MCF 10A (cell line): ENCODE measurements at regions of chr18 and their contacts with region 1.

Region 1: GRCh38 chr18:54983041-54983686 is 23.9 kb upstream of the CCDC68 start:
- DNase-seq: peak; percentile 73
- H3K4me3 Mint-ChIP-seq: no peak overlapping the region
- H3K27ac Mint-ChIP-seq: no peak overlapping the region
- H3K4me1 Mint-ChIP-seq: no peaks in the 10 kb centered on the region
- H3K27me3 Mint-ChIP-seq: no peaks in the 10 kb centered on the region
- CTCF ChIP-seq: peak; percentile 74

Region 2: DNA sequence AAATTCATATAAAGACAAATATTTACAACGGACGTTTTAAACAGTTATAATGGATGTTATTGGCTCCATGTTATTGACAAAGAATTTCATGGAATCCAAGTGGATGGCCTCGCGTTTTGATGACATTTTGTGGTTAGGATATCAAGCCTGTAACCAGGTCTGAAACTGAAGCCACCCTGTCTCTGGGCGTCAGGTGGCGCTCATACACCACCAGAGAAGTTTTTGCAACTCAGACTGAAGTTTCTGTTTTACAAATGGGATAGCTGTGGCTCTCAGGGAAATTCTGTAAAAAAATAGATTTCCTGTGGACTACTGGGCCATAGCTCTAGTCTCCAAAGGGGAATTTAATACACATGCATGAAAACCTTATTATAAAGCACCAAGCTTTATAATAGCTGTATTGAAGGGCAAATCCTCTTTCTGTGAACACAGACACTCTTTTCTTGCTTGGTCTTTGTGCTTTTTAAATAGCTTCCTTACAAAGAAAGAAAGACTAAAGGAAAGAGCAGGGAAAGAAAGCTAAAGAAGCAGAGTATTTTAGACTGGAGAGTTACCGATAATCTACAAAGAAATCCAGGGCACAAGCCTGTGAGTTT is 538.7 kb before region 1 on chr18:
- CTCF ChIA-PET with region 1: interaction called, 5 read pairs
- POLR2A ChIA-PET with region 1: no interaction called
- intact Hi-C with region 1: loop called (anchors 1 kb)
- DNase-seq: peak; percentile 71
- H3K4me3 Mint-ChIP-seq: no peak overlapping the region
- H3K27ac Mint-ChIP-seq: no peak overlapping the region
- H3K4me1 Mint-ChIP-seq: peaks cover 5% of the 10 kb centered on the region
- H3K27me3 Mint-ChIP-seq: no peaks in the 10 kb centered on the region
- CTCF ChIP-seq: peak; percentile 93

Region 3: GRCh38 chr18:54671291-54671881 is 311.8 kb before region 1 on chr18:
- CTCF ChIA-PET with region 1: interaction called, 25 read pairs
- POLR2A ChIA-PET with region 1: no interaction called
- intact Hi-C with region 1: no loop called
- DNase-seq: peak; percentile 59
- H3K4me3 Mint-ChIP-seq: no peak overlapping the region
- H3K27ac Mint-ChIP-seq: no peak overlapping the region
- H3K4me1 Mint-ChIP-seq: no peaks in the 10 kb centered on the region
- H3K27me3 Mint-ChIP-seq: no peaks in the 10 kb centered on the region
- CTCF ChIP-seq: peak; percentile 49

Region 4: DNA sequence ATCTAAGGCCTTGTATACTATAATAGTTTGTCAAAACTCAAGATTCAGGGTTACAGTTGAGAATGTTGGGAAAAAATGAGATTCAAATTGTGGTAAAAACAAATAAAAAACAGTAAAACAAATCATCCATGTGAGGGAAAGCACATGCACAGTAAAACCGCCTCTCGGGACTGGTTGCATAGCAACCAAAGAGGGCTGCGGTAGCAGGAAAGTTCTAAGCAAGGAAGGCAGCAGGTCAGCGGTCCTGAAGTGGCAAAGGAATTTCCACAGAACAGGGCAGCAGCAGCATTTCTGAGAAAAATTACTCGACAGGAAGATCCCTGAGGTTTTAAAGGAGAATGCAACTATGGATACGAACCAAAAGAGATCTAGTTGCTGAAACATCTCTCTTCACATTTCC is 298.4 kb before region 1 on chr18:
- CTCF ChIA-PET with region 1: interaction called, 54 read pairs
- POLR2A ChIA-PET with region 1: interaction called, 5 read pairs
- intact Hi-C with region 1: loop called (anchors 1 kb)
- DNase-seq: no peak
- H3K4me3 Mint-ChIP-seq: no peak overlapping the region
- H3K27ac Mint-ChIP-seq: no peak overlapping the region
- H3K4me1 Mint-ChIP-seq: peaks cover 1% of the 10 kb centered on the region
- H3K27me3 Mint-ChIP-seq: no peaks in the 10 kb centered on the region
- CTCF ChIP-seq: no peak

Region 5: GRCh38 chr18:54961016-54961423 is 22.1 kb before region 1 on chr18:
- CTCF ChIA-PET with region 1: interaction called, 13 read pairs
- POLR2A ChIA-PET with region 1: no interaction called
- intact Hi-C with region 1: no loop called
- DNase-seq: no peak
- H3K4me3 Mint-ChIP-seq: no peak overlapping the region
- H3K27ac Mint-ChIP-seq: no peak overlapping the region
- H3K4me1 Mint-ChIP-seq: peaks cover 21% of the 10 kb centered on the region
- H3K27me3 Mint-ChIP-seq: no peaks in the 10 kb centered on the region
- CTCF ChIP-seq: no peak